ENCODE measurements at regions of chr2 and their contacts with region 1.

Region 1: GRCh38 chr2:222561817-222562645 is 93.9 kb downstream of the FARSB start:
- DNase-seq: peak in 1 of 3 donors; percentile 82
- ATAC-seq: peak; percentile 76
- H3K4me3 ChIP-seq: no peak overlapping the region
- H3K4me1 ChIP-seq: no peaks in the 10 kb centered on the region
- CTCF ChIP-seq: no peak

Region 2: DNA sequence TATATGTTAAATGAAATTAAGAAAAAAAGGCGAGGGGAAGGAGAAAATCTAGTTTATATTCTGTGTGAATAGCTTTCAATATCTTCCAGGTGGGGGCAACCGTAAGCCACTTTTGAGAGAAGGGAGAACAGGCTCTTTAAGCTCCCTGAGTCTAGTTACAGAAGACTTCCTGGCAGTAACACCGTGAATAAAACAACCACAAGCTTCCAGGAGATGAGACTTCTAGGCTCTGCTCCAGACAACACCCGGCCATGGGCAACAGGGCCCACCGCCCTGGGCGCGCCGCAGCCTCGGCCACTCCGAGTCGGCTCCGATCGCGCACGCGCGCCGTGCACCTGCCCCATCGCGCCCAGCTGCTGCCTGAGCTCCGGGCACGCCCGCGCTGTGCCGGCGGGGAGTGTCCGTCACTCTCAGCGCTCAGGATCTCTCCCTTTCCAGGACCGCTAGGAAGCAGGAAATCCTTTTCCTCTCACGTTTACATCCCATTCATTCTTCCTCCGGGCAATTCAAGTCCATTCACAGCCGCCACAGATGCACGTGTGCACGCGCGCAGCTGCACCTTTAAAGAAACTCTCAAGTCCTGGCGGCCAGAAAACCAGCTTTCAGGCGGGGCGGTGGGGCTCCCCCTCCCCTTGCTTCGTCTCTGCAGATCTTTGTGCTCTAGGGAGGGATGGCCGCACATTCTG is 243.9 kb before region 1 on chr2:
- intact Hi-C with region 1: loop called (anchors 5 kb)
- DNase-seq: peak; percentile 82 to 87 (median 83)
- ATAC-seq: peak; percentile 97
- H3K4me3 ChIP-seq: no peak overlapping the region
- H3K4me1 ChIP-seq: peaks cover 21% of the 10 kb centered on the region
- CTCF ChIP-seq: no peak

Region 3: GRCh38 chr2:222819722-222820333 is 257.8 kb after region 1 on chr2:
- intact Hi-C with region 1: no loop called
- DNase-seq: no peak
- ATAC-seq: no peak
- H3K4me3 ChIP-seq: no peak overlapping the region
- H3K4me1 ChIP-seq: no peaks in the 10 kb centered on the region
- CTCF ChIP-seq: no peak

Measured in mucosa of descending colon (tissue), 3 donors.